ENCODE measurements at regions of chr3 and their contacts with region 1.

Region 1: DNA sequence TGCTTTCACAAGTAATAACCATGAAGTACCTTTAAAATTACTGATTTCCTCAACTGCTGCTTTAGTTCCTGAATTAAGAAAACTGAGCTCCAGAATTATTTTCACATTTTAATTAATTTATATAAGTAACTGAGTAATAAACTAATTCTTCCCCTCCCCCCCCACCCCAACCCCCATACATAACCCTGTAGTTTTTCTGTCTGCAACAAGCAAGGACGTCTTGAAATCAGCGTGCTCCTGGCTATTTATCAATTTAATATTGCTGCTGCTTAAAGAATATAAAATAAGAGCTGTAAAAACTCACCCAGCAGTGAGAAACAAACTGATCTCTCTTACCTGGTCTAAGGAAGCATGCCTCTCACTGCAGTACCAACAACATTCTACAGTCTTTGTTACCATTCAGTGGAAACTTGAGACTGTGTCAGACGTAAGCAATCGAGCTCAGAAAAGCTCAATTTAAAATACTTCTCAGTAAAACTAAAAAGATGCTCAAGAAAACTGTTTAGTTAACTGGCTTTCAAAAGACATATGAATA is 121.0 kb downstream of the TFDP2 start:
- DNase-seq: peak; percentile 74
- H3K4me3 Mint-ChIP-seq: peak overlapping the region; percentile 84
- H3K27ac Mint-ChIP-seq: peak overlapping the region; percentile 25
- H3K4me1 Mint-ChIP-seq: peaks cover 12% of the 10 kb centered on the region
- H3K27me3 Mint-ChIP-seq: no peaks in the 10 kb centered on the region
- CTCF ChIP-seq: no peak

Region 2: GRCh38 chr3:142148792-142149672 is 120.7 kb after region 1 on chr3 and contains the start of gene TFDP2:
- CTCF ChIA-PET with region 1: no interaction called
- POLR2A ChIA-PET with region 1: interaction called, 14 read pairs
- intact Hi-C with region 1: no loop called
- DNase-seq: peak; percentile 90
- H3K4me3 Mint-ChIP-seq: peak within 1 kb of the TSS; percentile 80
- H3K27ac Mint-ChIP-seq: peak within 1 kb of the TSS; percentile 96
- H3K4me1 Mint-ChIP-seq: peaks cover 30% of the 10 kb centered on the region
- H3K27me3 Mint-ChIP-seq: no peaks in the 10 kb centered on the region
- CTCF ChIP-seq: no peak
- total RNA-seq, gene TFDP2: 38.4 and 43.2 TPM in 2 replicates

Measured in MCF 10A (cell line).